ENCODE measurements at regions of chr16 and their contacts with region 1.

Region 1: DNA sequence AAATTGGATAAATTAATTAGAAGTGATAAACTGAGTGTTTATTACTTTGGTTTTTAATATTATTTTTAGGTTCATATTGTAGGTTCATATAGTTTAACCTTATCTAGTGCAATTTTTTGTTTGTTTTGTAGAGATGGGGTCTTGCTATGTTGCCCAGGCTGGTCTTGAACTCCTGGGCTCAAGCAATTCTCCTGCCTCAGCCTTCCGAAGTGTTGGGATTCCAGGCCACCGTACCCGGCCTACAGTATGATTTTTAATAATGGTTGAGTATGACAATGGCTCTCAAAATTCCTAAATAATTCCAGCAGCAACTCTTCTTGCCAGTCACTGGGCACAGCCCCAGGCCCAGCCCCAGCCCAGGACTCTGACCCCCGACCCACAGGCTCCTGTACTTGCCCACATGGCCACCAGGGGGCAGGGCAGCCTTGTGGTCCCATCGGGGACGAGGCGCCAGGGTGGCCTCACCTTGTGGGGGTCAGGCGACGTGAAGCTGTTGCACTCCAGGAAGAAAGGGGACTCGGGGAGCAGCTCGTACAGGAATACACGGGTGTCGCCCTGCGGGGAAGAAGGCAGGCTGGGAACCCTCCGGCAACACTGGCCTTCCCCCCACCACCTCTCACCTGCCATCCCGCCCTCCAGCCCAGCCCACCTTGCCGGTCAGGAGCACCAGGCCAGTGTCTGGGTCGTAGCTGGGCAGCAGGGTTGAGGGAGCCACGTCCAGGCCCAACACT is 7.9 kb upstream of the PAM16 start:
- DNase-seq: peak in 1 of 2 experiments; percentile 99
- H3K4me3 ChIP-seq: no peak overlapping the region
- H3K27ac ChIP-seq: no peak overlapping the region
- H3K4me1 ChIP-seq: peaks cover 0 to 3% (median 1%) of the 10 kb centered on the region in 4 experiments; a peak in 3 of 7 replicates
- H3K27me3 ChIP-seq: no peaks in the 10 kb centered on the region
- CTCF ChIP-seq: peak; percentile 90 to 98 (median 94)
- EP300 ChIP-seq: no peak
- POLR2A ChIP-seq: no peak
- RAD21 ChIP-seq: peak; percentile 94 to 98

Region 2: GRCh38 chr16:4371357-4372000 is 12.5 kb after region 1 on chr16 and contains the start of gene VASN:
- CTCF ChIA-PET with region 1: interaction called, 112 read pairs
- POLR2A ChIA-PET with region 1: interaction called, 22 read pairs
- DNase-seq: peak in 1 of 2 experiments; percentile 93
- H3K4me3 ChIP-seq: peak within 1 kb of the TSS; percentile 54 to 78 (median 59)
- H3K27ac ChIP-seq: no peak within 1 kb of the TSS
- H3K4me1 ChIP-seq: peaks cover 4 to 40% (median 34%) of the 10 kb centered on the region in 4 experiments
- H3K27me3 ChIP-seq: peaks cover 0 to 3% (median under 1%) of the 10 kb centered on the region in 4 experiments; a peak in 2 of 7 replicates
- CTCF ChIP-seq: no peak
- EP300 ChIP-seq: no peak
- POLR2A ChIP-seq: peak in 1 of 2 experiments; percentile 97; a peak in 2 of 3 replicates
- RAD21 ChIP-seq: no peak
- total RNA-seq, gene VASN: 9.6 and 10.1 TPM in 2 replicates

Region 3: DNA sequence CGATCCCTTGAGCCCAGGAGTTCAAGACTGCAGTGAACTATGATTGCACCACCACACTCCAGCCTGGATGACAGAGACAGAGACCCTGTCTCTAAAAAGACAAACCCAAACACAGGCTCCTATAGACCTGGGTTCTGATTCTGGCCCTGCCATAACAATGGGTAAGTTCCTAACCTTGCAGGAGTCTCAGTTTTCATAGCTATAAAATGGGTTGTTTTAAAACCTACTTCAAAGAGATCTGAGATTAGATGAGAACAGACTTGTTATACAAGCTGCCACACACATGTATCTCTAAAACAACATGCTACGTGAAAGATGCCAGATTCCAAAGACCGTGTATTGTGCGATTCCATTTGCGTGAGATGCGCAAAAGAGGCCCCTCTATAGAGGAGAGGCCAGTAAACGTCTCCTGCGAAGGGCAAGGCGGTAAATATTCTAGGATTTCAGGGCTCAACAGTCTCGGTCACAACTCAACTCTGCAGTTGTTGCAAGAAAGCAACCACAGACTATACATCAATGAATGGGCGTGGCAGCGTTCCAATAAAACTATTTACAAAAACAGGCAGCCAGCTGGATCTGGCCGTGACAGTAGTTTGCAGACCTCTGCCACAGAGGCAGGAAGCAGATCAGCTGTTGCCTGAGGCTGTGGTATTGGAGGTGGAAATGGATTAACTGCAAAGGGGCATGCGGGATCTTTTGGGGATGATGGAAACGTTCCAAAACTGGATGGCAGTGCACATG is 51.5 kb after region 1 on chr16:
- CTCF ChIA-PET with region 1: interaction called, 425 read pairs
- POLR2A ChIA-PET with region 1: interaction called, 3 read pairs
- DNase-seq: no peak
- H3K4me3 ChIP-seq: no peak overlapping the region
- H3K27ac ChIP-seq: no peak overlapping the region
- H3K4me1 ChIP-seq: peaks cover under 1 to 5% (median 3%) of the 10 kb centered on the region in 4 experiments; a peak in 5 of 7 replicates
- H3K27me3 ChIP-seq: no peaks in the 10 kb centered on the region
- CTCF ChIP-seq: no peak
- EP300 ChIP-seq: no peak
- POLR2A ChIP-seq: no peak
- RAD21 ChIP-seq: no peak

Measured in H1 (cell line).